Activated CD8-positive, alpha-beta T cell treated with anti-CD3 and anti-CD28 coated beads for 36 hours (primary cell): ENCODE measurements at regions of chr3 and their contacts with region 1.

Region 1: DNA sequence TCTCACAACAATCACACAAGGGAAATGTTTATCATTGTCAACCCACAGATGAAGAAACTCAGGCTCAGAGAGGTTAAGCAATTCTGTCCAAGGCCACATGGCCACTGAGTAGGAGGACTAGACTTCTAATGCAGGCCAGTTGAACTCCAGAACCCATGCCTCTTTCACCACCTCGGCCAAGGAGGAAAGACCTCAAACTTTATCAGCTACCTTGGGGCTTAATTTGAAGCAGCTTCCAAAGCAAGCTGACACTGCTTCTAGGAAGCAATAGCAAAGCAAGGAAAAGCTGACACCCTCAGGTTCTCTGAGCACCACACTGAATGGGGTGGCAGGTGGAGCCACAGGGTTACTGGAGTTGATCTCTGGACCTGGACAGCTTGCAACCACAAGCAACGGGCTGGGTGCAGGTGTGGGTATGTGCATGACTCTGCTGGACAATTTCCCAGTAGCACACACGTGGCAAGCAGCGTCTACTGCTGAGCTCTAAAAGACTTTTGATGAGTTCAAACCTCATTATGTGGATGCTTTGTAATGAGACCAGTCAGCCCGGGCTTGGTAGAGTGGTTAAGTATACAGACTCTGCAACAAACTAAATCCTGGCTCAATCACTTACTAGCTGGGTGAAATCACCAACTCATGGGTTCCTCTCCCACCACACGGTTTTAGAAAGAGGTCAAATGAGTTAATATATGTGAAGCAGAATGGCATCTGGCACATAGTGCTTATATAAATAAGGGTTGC is 23.1 kb downstream of the CCNL1 start:
- DNase-seq: no peak
- ATAC-seq: no peak
- H3K4me3 Mint-ChIP-seq: no peak overlapping the region
- H3K27ac Mint-ChIP-seq: peak overlapping the region; percentile 31
- H3K4me1 Mint-ChIP-seq: peaks cover 42% of the 10 kb centered on the region
- H3K27me3 Mint-ChIP-seq: no peaks in the 10 kb centered on the region
- CTCF ChIP-seq: no peak

Region 2: GRCh38 chr3:156151824-156152428 is 984.9 kb before region 1 on chr3:
- CTCF ChIA-PET with region 1: interaction called, 13 read pairs
- POLR2A ChIA-PET with region 1: interaction called, 3 read pairs
- intact Hi-C with region 1: no loop called
- DNase-seq: peak; percentile 79
- ATAC-seq: peak; percentile 66
- H3K4me3 Mint-ChIP-seq: no peak overlapping the region
- H3K27ac Mint-ChIP-seq: no peak overlapping the region
- H3K4me1 Mint-ChIP-seq: peaks cover 7% of the 10 kb centered on the region
- H3K27me3 Mint-ChIP-seq: no peaks in the 10 kb centered on the region
- CTCF ChIP-seq: peak; percentile 84

Region 3: GRCh38 chr3:156554842-156555687 is 581.8 kb before region 1 on chr3 and contains the start of gene SSR3:
- CTCF ChIA-PET with region 1: interaction called, 18 read pairs
- POLR2A ChIA-PET with region 1: no interaction called
- intact Hi-C with region 1: no loop called
- DNase-seq: peak; percentile 100
- ATAC-seq: peak; percentile 100
- H3K4me3 Mint-ChIP-seq: peak within 1 kb of the TSS; percentile 94
- H3K27ac Mint-ChIP-seq: peak within 1 kb of the TSS; percentile 95
- H3K4me1 Mint-ChIP-seq: peaks cover 39% of the 10 kb centered on the region
- H3K27me3 Mint-ChIP-seq: no peaks in the 10 kb centered on the region
- CTCF ChIP-seq: no peak
- total RNA-seq, gene SSR3: 175 TPM

Region 4: DNA sequence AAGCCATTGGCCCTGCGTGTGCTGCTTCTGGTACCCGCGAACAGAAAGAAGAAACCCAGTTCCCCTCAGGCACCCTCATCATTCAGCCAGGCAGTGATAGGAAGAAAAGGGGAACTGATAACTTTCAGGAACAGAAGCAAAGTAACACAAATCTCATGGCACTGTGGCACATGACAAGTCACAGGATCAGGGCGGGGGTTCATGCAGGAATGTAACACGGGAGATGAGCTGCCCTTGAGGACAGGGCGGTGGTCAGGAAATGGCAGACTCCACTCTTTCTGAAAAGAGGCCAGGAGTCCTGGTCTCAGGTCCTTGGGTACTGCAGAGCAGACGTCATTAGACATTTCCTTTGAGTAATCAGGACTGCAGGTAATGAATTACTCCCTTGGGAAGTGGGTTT is 72.4 kb before region 1 on chr3:
- CTCF ChIA-PET with region 1: interaction called, 12 read pairs
- POLR2A ChIA-PET with region 1: no interaction called
- intact Hi-C with region 1: no loop called
- DNase-seq: no peak
- ATAC-seq: no peak
- H3K4me3 Mint-ChIP-seq: no peak overlapping the region
- H3K27ac Mint-ChIP-seq: no peak overlapping the region
- H3K4me1 Mint-ChIP-seq: peaks cover 26% of the 10 kb centered on the region
- H3K27me3 Mint-ChIP-seq: no peaks in the 10 kb centered on the region
- CTCF ChIP-seq: no peak

Region 5: GRCh38 chr3:157104928-157105652 is 31.7 kb before region 1 on chr3:
- CTCF ChIA-PET with region 1: interaction called, 13 read pairs
- POLR2A ChIA-PET with region 1: interaction called, 3 read pairs
- intact Hi-C with region 1: no loop called
- DNase-seq: no peak
- ATAC-seq: peak; percentile 32
- H3K4me3 Mint-ChIP-seq: no peak overlapping the region
- H3K27ac Mint-ChIP-seq: no peak overlapping the region
- H3K4me1 Mint-ChIP-seq: peaks cover 17% of the 10 kb centered on the region
- H3K27me3 Mint-ChIP-seq: no peaks in the 10 kb centered on the region
- CTCF ChIP-seq: no peak

Region 6: DNA sequence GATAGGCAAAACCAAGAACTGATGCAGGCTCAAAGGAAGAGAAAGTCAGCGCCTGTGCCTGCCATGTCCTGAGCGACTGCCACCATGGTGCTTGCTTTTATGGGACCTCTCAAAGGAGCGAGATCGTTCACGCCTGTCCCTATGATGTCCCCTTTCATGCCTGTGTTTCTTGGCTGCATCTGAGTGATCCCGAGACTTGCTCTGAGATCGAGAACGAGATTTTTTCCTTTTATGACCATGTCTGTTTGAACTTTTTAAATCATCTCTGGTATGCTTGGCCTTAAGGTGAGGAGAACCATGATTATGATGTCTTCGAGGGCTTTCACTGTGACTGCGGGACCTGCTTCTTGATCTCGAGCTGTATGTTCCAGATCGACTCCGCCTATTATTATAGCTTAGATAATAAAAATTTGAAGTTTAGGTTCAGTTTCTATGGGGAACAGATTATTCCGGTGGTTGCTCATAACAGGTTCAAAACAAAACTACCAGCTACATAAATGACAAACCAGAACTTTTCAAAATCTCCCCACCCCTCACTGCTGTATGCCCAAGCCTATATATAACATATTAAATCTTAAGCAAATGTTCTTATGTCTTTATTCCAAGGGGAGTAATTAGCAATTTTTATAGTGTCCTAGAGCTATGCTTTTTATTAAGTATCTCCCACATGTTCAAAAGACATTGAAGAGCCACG is 11.5 kb after region 1 on chr3:
- CTCF ChIA-PET with region 1: interaction called, 56 read pairs
- POLR2A ChIA-PET with region 1: interaction called, 18 read pairs
- intact Hi-C with region 1: no loop called
- DNase-seq: no peak
- ATAC-seq: peak; percentile 22
- H3K4me3 Mint-ChIP-seq: no peak overlapping the region
- H3K27ac Mint-ChIP-seq: peak overlapping the region; percentile 73
- H3K4me1 Mint-ChIP-seq: peaks cover 46% of the 10 kb centered on the region
- H3K27me3 Mint-ChIP-seq: no peaks in the 10 kb centered on the region
- CTCF ChIP-seq: no peak

Region 7: GRCh38 chr3:157282261-157283191 is 145.7 kb after region 1 on chr3:
- CTCF ChIA-PET with region 1: no interaction called
- POLR2A ChIA-PET with region 1: no interaction called
- intact Hi-C with region 1: no loop called
- DNase-seq: no peak
- ATAC-seq: no peak
- H3K4me3 Mint-ChIP-seq: no peak overlapping the region
- H3K27ac Mint-ChIP-seq: no peak overlapping the region
- H3K4me1 Mint-ChIP-seq: peaks cover 4% of the 10 kb centered on the region
- H3K27me3 Mint-ChIP-seq: no peaks in the 10 kb centered on the region
- CTCF ChIP-seq: no peak